ENCODE measurements at regions of chr4 and their contacts with region 1.

Region 1: GRCh38 chr4:26288355-26288909 is 32.4 kb upstream of the RBPJ start:
- DNase-seq: peak; percentile 47
- H3K4me3 Mint-ChIP-seq: no peak overlapping the region
- H3K27ac Mint-ChIP-seq: no peak overlapping the region
- H3K4me1 Mint-ChIP-seq: peaks cover 19% of the 10 kb centered on the region
- H3K27me3 Mint-ChIP-seq: no peaks in the 10 kb centered on the region
- CTCF ChIP-seq: no peak

Region 2: GRCh38 chr4:26235500-26235899 is 52.9 kb before region 1 on chr4:
- CTCF ChIA-PET with region 1: interaction called, 11 read pairs
- POLR2A ChIA-PET with region 1: interaction called, 31 read pairs
- intact Hi-C with region 1: no loop called
- DNase-seq: peak; percentile 92
- H3K4me3 Mint-ChIP-seq: no peak overlapping the region
- H3K27ac Mint-ChIP-seq: peak overlapping the region; percentile 61
- H3K4me1 Mint-ChIP-seq: peaks cover 15% of the 10 kb centered on the region
- H3K27me3 Mint-ChIP-seq: no peaks in the 10 kb centered on the region
- CTCF ChIP-seq: no peak

Region 3: DNA sequence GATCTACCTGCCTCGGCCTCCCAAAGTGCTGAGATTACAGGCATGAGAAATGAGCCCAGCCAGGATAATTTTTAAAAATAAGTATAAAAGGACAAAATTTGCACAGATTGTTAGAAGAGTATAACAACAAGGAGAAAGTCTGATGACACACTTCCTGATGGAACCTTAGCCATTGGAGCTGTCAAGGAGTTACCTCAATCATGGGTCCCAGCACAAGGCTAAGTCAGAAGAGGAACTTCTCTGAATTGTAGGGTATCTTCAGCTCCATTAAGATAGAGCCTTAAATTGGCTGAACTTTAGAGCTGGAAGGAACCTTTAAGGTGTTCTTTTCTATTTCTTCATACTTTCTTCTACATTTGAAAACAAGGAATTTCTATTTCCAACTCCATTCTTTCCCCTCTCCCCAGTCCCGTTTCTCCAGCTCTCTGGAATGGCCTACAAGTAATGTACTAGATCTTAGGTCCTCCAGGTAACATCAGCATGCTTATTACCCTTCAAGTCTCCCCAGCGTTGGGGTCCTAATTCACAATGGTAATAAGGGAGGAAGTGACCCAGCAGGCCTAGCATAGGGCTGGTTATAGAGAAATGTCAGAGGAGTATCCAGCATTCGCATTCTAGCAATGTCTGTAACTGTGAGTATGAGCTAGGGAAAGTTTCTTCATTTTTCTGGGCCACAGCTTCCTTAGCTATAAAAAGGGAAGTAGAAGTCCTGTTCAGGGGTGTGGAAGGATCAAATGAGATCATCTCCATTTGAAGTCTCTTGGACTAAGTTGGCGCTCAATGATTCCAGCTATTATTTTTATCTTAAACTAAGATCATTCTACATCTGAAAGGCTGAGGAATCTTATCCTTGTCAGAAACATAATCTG is 13.8 kb after region 1 on chr4:
- CTCF ChIA-PET with region 1: interaction called, 10 read pairs
- POLR2A ChIA-PET with region 1: no interaction called
- intact Hi-C with region 1: no loop called
- DNase-seq: no peak
- H3K4me3 Mint-ChIP-seq: no peak overlapping the region
- H3K27ac Mint-ChIP-seq: no peak overlapping the region
- H3K4me1 Mint-ChIP-seq: peaks cover 7% of the 10 kb centered on the region
- H3K27me3 Mint-ChIP-seq: no peaks in the 10 kb centered on the region
- CTCF ChIP-seq: no peak

Region 4: GRCh38 chr4:26319467-26319948 is 31.1 kb after region 1 on chr4:
- CTCF ChIA-PET with region 1: no interaction called
- POLR2A ChIA-PET with region 1: interaction called, 43 read pairs
- intact Hi-C with region 1: no loop called
- DNase-seq: peak; percentile 100
- H3K4me3 Mint-ChIP-seq: peak overlapping the region; percentile 87
- H3K27ac Mint-ChIP-seq: peak overlapping the region; percentile 94
- H3K4me1 Mint-ChIP-seq: peaks cover 16% of the 10 kb centered on the region
- H3K27me3 Mint-ChIP-seq: no peaks in the 10 kb centered on the region
- CTCF ChIP-seq: no peak

Region 5: GRCh38 chr4:26388671-26389070 is 100.2 kb after region 1 on chr4:
- CTCF ChIA-PET with region 1: no interaction called
- POLR2A ChIA-PET with region 1: no interaction called
- intact Hi-C with region 1: no loop called
- DNase-seq: peak; percentile 13
- H3K4me3 Mint-ChIP-seq: no peak overlapping the region
- H3K27ac Mint-ChIP-seq: peak overlapping the region; percentile 64
- H3K4me1 Mint-ChIP-seq: peaks cover 9% of the 10 kb centered on the region
- H3K27me3 Mint-ChIP-seq: no peaks in the 10 kb centered on the region
- CTCF ChIP-seq: no peak

Measured in MCF 10A (cell line).